Activated CD4-positive, alpha-beta T cell treated with anti-CD3 and anti-CD28 coated beads for 36 hours (primary cell): ENCODE measurements at regions of chr18 and their contacts with region 1.

Region 1: DNA sequence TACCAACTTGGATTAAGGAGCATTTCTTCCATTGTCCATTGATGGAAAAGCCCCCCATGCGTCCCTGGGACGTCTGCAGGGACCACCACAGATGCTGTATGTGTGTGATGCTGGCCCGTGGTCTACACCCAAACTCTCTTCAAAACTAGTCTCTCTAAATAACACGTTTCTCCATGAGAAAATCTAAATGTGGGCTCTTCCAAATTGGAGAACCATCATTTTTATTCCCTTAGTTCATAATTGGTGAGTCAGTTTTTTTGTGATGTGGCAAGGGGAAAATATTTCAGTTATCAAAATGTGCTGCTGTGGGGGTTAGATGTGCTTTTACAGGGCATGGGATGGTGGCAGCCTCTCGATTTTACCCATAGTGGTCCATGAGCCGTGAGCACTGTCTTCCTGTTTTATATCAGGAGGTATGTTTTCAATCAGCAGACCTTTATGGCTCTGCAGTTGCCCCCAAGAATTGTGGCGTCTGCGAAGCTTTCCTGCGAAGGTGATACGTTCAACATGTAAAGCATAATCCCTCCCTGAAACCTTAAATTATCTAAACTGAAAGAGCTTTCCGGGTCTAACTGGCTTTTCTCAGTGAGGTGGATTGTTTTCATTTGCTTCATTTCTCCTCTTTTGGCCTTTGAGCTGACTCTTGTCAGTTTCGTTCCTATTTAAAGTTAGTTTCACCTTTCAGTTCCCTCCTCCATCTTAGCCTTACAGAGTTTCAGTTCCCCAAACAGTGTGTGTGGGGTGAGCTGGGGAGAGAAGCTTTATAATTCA is 78.4 kb downstream of the SETBP1 start:
- DNase-seq: peak; percentile 79
- ATAC-seq: peak; percentile 91
- H3K4me3 Mint-ChIP-seq: peak overlapping the region; percentile 35
- H3K27ac Mint-ChIP-seq: peak overlapping the region; percentile 93
- H3K4me1 Mint-ChIP-seq: peaks cover 27% of the 10 kb centered on the region
- H3K27me3 Mint-ChIP-seq: peaks cover 10% of the 10 kb centered on the region

Region 2: GRCh38 chr18:44725300-44726096 is 33.5 kb before region 1 on chr18:
- CTCF ChIA-PET with region 1: interaction called, 10 read pairs
- POLR2A ChIA-PET with region 1: interaction called, 20 read pairs
- intact Hi-C with region 1: loop called (anchors 1 kb)
- DNase-seq: peak; percentile 81
- ATAC-seq: peak; percentile 78
- H3K4me3 Mint-ChIP-seq: peak overlapping the region; percentile 17
- H3K27ac Mint-ChIP-seq: peak overlapping the region; percentile 80
- H3K4me1 Mint-ChIP-seq: peaks cover 80% of the 10 kb centered on the region
- H3K27me3 Mint-ChIP-seq: peaks cover 2% of the 10 kb centered on the region

Region 3: GRCh38 chr18:44733069-44733753 is 25.8 kb before region 1 on chr18:
- CTCF ChIA-PET with region 1: interaction called, 7 read pairs
- POLR2A ChIA-PET with region 1: interaction called, 6 read pairs
- intact Hi-C with region 1: loop called in 1 of 2 experiments (anchors 2 kb)
- DNase-seq: peak; percentile 58
- ATAC-seq: peak; percentile 79
- H3K4me3 Mint-ChIP-seq: no peak overlapping the region
- H3K27ac Mint-ChIP-seq: no peak overlapping the region
- H3K4me1 Mint-ChIP-seq: peaks cover 47% of the 10 kb centered on the region
- H3K27me3 Mint-ChIP-seq: peaks cover 19% of the 10 kb centered on the region

Region 4: DNA sequence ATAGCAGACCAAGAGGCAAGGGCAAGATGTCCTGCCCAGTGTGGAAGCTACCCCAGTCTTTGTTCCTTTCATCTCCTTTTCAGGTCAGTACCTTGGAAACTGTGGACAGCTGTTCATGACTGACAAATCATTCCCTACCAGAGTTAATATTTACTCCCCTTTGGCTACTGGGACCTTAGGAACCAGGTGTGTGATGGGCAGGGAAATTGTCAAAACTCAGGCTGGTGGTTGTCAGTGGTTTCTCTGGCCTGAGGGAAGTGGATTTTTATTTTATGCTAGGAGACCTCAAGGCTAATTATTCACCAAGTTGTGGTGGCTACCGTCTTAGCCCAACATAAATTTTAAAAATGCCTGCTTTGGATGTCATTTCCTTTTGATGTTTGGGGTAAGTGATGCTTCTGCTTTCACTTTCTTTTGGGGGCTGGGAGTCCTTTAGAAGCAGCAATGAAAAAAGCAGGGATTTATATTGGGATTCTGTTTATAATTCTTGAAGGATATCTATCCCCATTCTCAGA is 40.9 kb after region 1 on chr18:
- CTCF ChIA-PET with region 1: interaction called, 4 read pairs
- POLR2A ChIA-PET with region 1: interaction called, 9 read pairs
- intact Hi-C with region 1: loop called in 1 of 2 experiments (anchors 2 kb)
- DNase-seq: no peak
- ATAC-seq: peak; percentile 14
- H3K4me3 Mint-ChIP-seq: no peak overlapping the region
- H3K27ac Mint-ChIP-seq: peak overlapping the region; percentile 2
- H3K4me1 Mint-ChIP-seq: peaks cover 58% of the 10 kb centered on the region
- H3K27me3 Mint-ChIP-seq: peaks cover 4% of the 10 kb centered on the region

Region 5: DNA sequence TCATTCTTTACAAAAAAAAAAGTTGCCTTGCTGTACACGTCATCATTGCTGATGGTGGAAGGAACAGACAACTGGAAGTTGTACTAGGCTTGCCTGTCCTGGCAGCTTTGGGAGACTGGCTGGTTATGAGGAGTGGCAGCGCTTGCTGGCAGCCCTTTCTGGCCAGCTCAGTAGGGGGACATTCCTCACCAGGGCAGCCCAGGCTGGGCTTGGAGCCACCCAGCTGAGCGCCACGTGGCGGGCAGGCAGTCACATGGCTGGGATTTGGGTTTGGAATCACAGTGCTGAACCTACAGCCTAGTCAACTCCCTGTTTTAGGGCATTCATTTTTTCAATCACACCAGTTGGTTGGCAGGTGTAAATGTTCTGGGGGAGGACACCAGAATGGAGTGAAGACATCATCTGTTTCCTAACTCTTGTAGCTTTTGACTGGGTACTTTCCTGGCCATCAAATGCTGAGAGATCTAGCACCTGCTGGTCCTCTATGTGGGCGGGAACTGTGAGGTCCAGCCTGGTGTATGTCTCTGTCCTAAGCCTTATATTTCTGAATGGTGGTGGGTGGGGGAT is 61.0 kb after region 1 on chr18:
- CTCF ChIA-PET with region 1: interaction called, 3 read pairs
- POLR2A ChIA-PET with region 1: interaction called, 6 read pairs
- intact Hi-C with region 1: loop called (anchors 1 to 2 kb)
- DNase-seq: no peak
- ATAC-seq: no peak
- H3K4me3 Mint-ChIP-seq: no peak overlapping the region
- H3K27ac Mint-ChIP-seq: no peak overlapping the region
- H3K4me1 Mint-ChIP-seq: peaks cover 28% of the 10 kb centered on the region
- H3K27me3 Mint-ChIP-seq: peaks cover 23% of the 10 kb centered on the region

Region 6: GRCh38 chr18:44887227-44887631 is 128.2 kb after region 1 on chr18:
- CTCF ChIA-PET with region 1: interaction called, 6 read pairs
- POLR2A ChIA-PET with region 1: interaction called, 7 read pairs
- intact Hi-C with region 1: loop called (anchors 1 kb)
- DNase-seq: peak; percentile 74
- ATAC-seq: peak; percentile 98
- H3K4me3 Mint-ChIP-seq: peak overlapping the region; percentile 11
- H3K27ac Mint-ChIP-seq: peak overlapping the region; percentile 96
- H3K4me1 Mint-ChIP-seq: peaks cover 30% of the 10 kb centered on the region
- H3K27me3 Mint-ChIP-seq: peaks cover 3% of the 10 kb centered on the region

Region 7: DNA sequence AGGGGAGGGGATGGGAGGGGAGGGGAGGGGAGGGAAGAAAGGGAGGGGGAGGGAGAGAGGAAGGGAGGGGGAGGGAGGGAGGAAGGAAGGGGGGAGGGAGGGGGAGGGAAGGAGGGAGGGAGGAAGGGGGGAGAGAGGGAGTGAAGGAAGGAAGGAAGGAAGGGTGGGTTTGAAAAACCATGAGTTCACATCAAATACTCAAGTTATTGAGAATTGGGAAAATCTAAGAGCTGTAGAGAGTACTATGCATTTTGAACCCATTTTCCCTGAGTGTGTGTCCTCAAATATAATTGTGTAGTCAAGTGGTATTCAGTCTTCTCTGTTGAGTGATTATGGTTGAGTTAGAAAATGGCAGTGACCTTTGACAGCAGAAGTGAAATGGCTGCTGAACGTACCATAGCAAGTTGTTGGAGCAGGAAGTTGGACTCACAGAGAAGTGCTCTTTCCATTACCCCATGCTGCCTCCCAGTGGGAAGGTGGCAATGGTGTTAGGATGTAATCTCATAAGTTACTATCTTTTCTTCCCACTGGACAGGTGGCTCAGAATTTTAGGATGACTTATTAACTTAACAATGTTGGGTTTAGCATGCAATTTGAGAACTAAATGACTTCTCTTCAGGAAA is 136.2 kb after region 1 on chr18:
- CTCF ChIA-PET with region 1: interaction called, 6 read pairs
- POLR2A ChIA-PET with region 1: interaction called, 7 read pairs
- intact Hi-C with region 1: loop called in 1 of 2 experiments (anchors 1 kb)
- DNase-seq: peak; percentile 62
- ATAC-seq: peak; percentile 45
- H3K4me3 Mint-ChIP-seq: no peak overlapping the region
- H3K27ac Mint-ChIP-seq: peak overlapping the region; percentile 27
- H3K4me1 Mint-ChIP-seq: peaks cover 51% of the 10 kb centered on the region
- H3K27me3 Mint-ChIP-seq: peaks cover 2% of the 10 kb centered on the region